ENCODE measurements at regions of chr4 and their contacts with region 1.

Region 1: GRCh38 chr4:24980064-24980690 is 50.6 kb downstream of the LGI2 start:
- DNase-seq: peak; percentile 58
- ATAC-seq: peak; percentile 60 to 72

Region 2: DNA sequence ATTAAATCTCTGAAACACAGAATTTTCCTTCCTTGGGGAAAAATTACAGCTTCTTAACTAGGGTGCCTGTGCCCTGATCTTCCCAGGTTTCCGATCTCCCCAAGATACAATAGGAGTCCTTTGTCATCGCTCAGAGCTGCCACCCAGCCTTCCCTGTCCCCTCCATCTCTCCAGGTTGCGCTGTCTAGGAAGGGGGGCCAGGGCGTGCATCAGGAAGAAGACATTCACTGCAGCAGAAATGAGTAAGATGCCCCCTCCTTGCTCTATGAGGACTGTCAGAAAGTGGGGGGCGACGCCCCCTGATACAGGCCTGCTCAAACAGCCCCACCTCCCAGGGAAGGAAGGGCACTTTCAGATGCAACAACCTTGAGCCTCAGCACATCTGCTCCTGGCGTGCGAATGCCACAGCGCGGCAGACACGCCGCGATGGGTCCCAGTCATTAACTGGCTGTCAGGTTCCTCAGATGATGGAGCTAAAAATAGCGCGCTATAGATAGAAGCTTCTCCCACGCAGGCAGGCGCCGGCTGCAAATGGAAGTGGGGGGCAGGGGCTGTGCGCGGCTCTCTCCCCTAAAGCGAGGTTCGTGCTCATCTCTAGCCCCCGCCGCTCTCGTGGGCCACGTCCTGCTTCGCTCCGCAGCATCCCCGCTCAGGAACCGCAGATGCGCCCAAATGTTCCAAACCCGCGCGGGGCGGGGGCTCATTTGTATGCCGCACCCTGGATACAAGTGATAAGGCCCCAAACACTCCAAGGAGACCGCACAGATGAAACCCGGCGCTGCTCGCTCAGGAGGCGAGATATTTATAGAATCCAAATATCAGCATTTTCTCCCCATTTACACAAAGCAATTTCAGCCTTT is 108.1 kb after region 1 on chr4:
- intact Hi-C with region 1: no loop called
- DNase-seq: peak; percentile 51
- ATAC-seq: peak; percentile 83 to 84

Region 3: GRCh38 chr4:25144870-25145481 is 164.8 kb after region 1 on chr4:
- intact Hi-C with region 1: loop called (anchors 2 to 10 kb)
- DNase-seq: no peak
- ATAC-seq: no peak

Region 4: DNA sequence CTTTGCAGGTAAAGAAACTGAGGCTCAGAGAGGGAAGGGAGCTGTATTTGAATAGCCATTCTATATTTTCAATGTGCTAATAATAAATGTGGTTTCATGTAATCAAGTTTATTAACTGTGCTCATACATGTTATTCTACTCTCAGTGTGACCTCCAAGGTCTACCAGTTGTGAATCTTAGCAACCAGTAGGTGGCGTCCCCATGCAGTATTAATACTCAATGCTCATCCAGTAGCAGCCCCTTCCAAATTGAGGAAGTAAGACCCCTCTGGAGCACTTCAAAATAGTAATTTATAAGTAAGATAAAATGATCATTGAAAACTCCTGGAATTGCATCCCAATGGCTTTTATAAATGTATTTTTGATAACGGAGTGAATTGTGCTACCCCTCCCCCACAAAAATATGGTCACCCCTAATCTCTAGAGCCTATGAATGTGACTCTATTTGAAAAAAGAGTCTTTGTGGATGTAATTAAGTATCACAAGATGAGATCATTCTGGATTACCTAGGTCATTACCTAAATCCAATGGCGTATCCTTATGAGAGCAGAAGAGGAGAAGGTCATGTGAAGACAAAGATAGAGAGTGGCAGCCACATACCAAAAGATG is 200.5 kb after region 1 on chr4:
- intact Hi-C with region 1: no loop called
- DNase-seq: peak; percentile 25
- ATAC-seq: peak in 1 of 2 donors; percentile 55

Region 5: GRCh38 chr4:25427871-25428270 is 447.7 kb after region 1 on chr4:
- intact Hi-C with region 1: no loop called
- DNase-seq: no peak
- ATAC-seq: no peak

Region 6: DNA sequence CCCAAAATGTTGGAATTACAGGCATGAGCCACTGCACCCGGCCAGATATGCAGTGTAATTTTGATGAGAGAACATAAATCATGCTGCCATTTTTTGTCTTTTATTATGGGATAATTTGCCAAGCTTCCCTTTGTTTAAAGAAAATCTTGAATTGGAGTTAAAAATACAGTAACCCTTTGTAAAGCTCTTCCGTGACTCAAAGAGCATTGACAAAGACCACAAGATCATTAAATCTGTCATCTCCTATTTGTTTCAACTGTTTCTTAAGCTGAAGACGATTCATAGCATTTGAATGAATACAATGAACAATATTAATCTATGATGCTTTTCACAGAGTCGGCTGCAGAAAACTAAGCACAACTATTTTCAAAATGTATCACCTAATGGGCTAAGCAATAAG is 529.5 kb after region 1 on chr4:
- intact Hi-C with region 1: no loop called
- DNase-seq: no peak
- ATAC-seq: no peak